CD4-positive, alpha-beta memory T cell (primary cell): ENCODE measurements at regions of chr13 and their contacts with region 1.

Region 1: DNA sequence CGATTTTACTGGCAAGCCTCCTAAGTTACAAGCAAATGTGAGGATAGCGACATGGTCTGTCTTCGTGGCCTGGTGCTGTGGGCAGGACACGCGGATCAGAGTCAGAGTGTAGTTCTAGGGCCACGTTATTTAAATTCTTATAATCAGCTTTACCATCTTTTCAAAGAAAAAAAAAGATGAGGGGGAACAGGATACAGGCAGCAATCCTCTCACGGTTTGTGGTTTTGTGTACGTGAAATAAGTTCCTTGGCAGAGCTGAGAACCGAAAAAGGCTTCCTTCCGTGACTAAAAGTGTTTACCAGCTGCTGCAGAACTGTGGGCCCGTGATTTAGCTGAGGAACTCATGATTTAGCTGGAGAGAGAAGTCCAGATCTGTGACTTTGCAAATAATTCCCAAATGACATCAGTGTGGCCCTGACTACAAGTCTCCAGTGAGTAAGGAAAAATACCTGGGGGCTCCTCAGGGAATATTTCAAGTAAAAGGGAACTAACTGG is 27.2 kb downstream of the RCBTB2 start:
- DNase-seq: peak; percentile 79 to 87 (median 84)
- H3K4me3 ChIP-seq: peak overlapping the region in 1 of 2 donors; percentile 32
- H3K4me3 Mint-ChIP-seq: peak overlapping the region; percentile 58 to 85 (median 73)
- H3K27ac ChIP-seq: peak overlapping the region; percentile 60
- H3K27ac Mint-ChIP-seq: peak overlapping the region; percentile 85 to 98 (median 97)
- H3K4me1 ChIP-seq: peaks cover 60% of the 10 kb centered on the region
- H3K4me1 Mint-ChIP-seq: peaks cover 40 to 80% (median 62%) of the 10 kb centered on the region in 4 donors
- H3K27me3 ChIP-seq: no peaks in the 10 kb centered on the region
- H3K27me3 Mint-ChIP-seq: no peaks in the 10 kb centered on the region

Region 2: GRCh38 chr13:48231080-48231479 is 274.6 kb before region 1 on chr13:
- CTCF ChIA-PET with region 1: no interaction called
- POLR2A ChIA-PET with region 1: no interaction called
- intact Hi-C with region 1: no loop called
- DNase-seq: no peak
- H3K4me3 ChIP-seq: no peak overlapping the region
- H3K4me3 Mint-ChIP-seq: peak overlapping the region; percentile 3 to 97 (median 44)
- H3K27ac ChIP-seq: no peak overlapping the region
- H3K27ac Mint-ChIP-seq: peak overlapping the region in 6 of 7 donors; percentile 31 to 97 (median 94)
- H3K4me1 ChIP-seq: peaks cover 23% of the 10 kb centered on the region
- H3K4me1 Mint-ChIP-seq: peaks cover 22 to 54% (median 34%) of the 10 kb centered on the region in 4 donors
- H3K27me3 ChIP-seq: no peaks in the 10 kb centered on the region
- H3K27me3 Mint-ChIP-seq: no peaks in the 10 kb centered on the region

Region 3: DNA sequence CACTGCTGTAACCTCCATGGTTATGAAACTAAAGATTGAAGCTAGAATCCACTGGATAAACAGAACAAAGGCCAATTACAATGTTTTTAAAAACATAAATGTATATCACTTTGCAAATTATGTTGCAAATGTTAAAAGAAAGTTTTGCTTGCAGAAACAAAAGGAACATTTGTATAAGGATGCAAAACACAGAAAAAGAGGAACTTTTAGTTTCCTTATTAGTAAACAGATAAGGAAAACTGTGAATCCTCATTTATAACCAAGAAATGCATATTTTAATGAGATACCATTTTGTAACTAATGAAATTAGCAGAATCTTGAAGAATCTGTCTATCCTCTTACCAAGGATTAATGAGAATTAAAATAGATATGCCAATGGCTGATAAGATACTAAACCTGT is 125.1 kb before region 1 on chr13:
- CTCF ChIA-PET with region 1: no interaction called
- POLR2A ChIA-PET with region 1: no interaction called
- intact Hi-C with region 1: no loop called
- DNase-seq: no peak
- H3K4me3 ChIP-seq: no peak overlapping the region
- H3K4me3 Mint-ChIP-seq: no peak overlapping the region
- H3K27ac ChIP-seq: no peak overlapping the region
- H3K27ac Mint-ChIP-seq: no peak overlapping the region
- H3K4me1 ChIP-seq: no peaks in the 10 kb centered on the region
- H3K4me1 Mint-ChIP-seq: peaks cover 0 to 6% (median 2%) of the 10 kb centered on the region in 4 donors
- H3K27me3 ChIP-seq: no peaks in the 10 kb centered on the region
- H3K27me3 Mint-ChIP-seq: no peaks in the 10 kb centered on the region

Region 4: GRCh38 chr13:48400850-48401291 is 104.8 kb before region 1 on chr13:
- CTCF ChIA-PET with region 1: interaction called, 3 read pairs
- POLR2A ChIA-PET with region 1: interaction called, 27 read pairs
- intact Hi-C with region 1: no loop called
- DNase-seq: peak in 2 of 5 donors; percentile 19 to 33
- H3K4me3 ChIP-seq: peak overlapping the region in 1 of 2 donors; percentile 21
- H3K4me3 Mint-ChIP-seq: peak overlapping the region; percentile 1 to 81 (median 67)
- H3K27ac ChIP-seq: peak overlapping the region; percentile 0
- H3K27ac Mint-ChIP-seq: peak overlapping the region; percentile 53 to 94 (median 77)
- H3K4me1 ChIP-seq: peaks cover 79% of the 10 kb centered on the region
- H3K4me1 Mint-ChIP-seq: peaks cover 47 to 89% (median 67%) of the 10 kb centered on the region in 4 donors
- H3K27me3 ChIP-seq: no peaks in the 10 kb centered on the region
- H3K27me3 Mint-ChIP-seq: no peaks in the 10 kb centered on the region

Region 5: DNA sequence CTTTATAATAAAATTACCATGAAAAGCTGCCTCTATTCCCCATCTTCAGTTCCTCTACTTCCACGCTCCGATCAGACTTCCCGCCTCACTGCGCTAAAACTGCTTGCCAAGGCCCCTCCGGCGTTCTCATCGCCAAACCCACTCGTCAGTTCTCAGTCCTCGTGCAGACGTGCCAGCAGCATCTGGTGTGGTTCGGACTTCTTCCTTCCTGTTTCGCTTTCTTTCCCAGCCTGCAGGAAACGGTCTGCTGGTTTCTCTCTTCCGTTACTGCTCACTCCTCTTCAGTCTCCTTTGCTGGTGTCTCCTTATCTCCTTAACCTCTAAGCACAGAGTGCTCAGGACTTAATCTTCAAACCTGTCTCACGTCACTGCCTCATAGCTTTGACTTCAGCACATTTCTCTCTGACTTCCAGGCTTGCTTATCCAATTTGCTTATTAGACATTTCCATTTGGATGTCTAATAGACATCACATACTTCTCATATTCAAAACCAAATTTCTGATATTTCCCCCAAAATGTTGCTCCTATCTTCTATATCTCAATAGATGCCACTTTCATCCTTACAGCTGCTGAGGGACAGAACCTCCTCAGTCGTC is 13.1 kb before region 1 on chr13:
- CTCF ChIA-PET with region 1: interaction called, 12 read pairs
- POLR2A ChIA-PET with region 1: interaction called, 113 read pairs
- intact Hi-C with region 1: loop called (anchors 1 kb)
- DNase-seq: peak; percentile 77 to 85 (median 81)
- H3K4me3 ChIP-seq: peak overlapping the region; percentile 63 to 70
- H3K4me3 Mint-ChIP-seq: no peak overlapping the region
- H3K27ac ChIP-seq: peak overlapping the region; percentile 74
- H3K27ac Mint-ChIP-seq: no peak overlapping the region
- H3K4me1 ChIP-seq: peaks cover 100% of the 10 kb centered on the region
- H3K4me1 Mint-ChIP-seq: peaks cover 32 to 51% (median 46%) of the 10 kb centered on the region in 4 donors
- H3K27me3 ChIP-seq: no peaks in the 10 kb centered on the region
- H3K27me3 Mint-ChIP-seq: no peaks in the 10 kb centered on the region

Region 6: DNA sequence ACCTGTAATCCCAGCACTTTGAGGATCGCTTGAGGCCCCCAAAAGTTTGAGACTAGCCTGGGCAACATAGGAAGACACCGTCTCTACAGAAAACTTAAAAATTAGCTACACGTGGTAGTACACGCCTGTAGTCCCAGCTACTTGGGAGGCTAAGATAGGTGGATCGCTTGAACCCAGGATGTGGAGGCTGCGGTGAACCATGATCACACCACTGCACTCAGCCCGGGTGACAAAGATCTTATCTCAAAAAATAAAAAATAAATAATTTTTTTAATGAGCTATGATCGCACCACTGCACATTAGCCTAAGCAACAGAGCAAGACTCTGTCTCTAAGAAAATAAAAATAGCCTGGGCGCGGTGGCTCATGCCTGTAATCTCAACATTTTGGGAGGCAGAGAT is 20.6 kb after region 1 on chr13:
- CTCF ChIA-PET with region 1: interaction called, 5 read pairs
- POLR2A ChIA-PET with region 1: interaction called, 122 read pairs
- intact Hi-C with region 1: no loop called
- DNase-seq: peak in 3 of 5 donors; percentile 34 to 39 (median 35)
- H3K4me3 ChIP-seq: no peak overlapping the region
- H3K4me3 Mint-ChIP-seq: peak overlapping the region in 2 of 8 donors; percentile 38 to 39
- H3K27ac ChIP-seq: no peak overlapping the region
- H3K27ac Mint-ChIP-seq: peak overlapping the region in 2 of 7 donors; percentile 57 to 63
- H3K4me1 ChIP-seq: peaks cover 39% of the 10 kb centered on the region
- H3K4me1 Mint-ChIP-seq: peaks cover 16 to 47% (median 24%) of the 10 kb centered on the region in 4 donors
- H3K27me3 ChIP-seq: no peaks in the 10 kb centered on the region
- H3K27me3 Mint-ChIP-seq: no peaks in the 10 kb centered on the region

Region 7: GRCh38 chr13:48580185-48580803 is 74.7 kb after region 1 on chr13:
- CTCF ChIA-PET with region 1: interaction called, 10 read pairs
- POLR2A ChIA-PET with region 1: interaction called, 14 read pairs
- intact Hi-C with region 1: no loop called
- DNase-seq: peak; percentile 64 to 74 (median 70)
- H3K4me3 ChIP-seq: no peak overlapping the region
- H3K4me3 Mint-ChIP-seq: peak overlapping the region in 1 of 8 donors; percentile 31
- H3K27ac ChIP-seq: no peak overlapping the region
- H3K27ac Mint-ChIP-seq: peak overlapping the region in 2 of 7 donors; percentile 0 to 43
- H3K4me1 ChIP-seq: peaks cover 19% of the 10 kb centered on the region
- H3K4me1 Mint-ChIP-seq: peaks cover 4 to 28% (median 13%) of the 10 kb centered on the region in 4 donors
- H3K27me3 ChIP-seq: no peaks in the 10 kb centered on the region
- H3K27me3 Mint-ChIP-seq: peaks cover 0 to 4% of the 10 kb centered on the region in 2 donors